ENCODE measurements at regions of chr2 and their contacts with region 1.

Region 1: DNA sequence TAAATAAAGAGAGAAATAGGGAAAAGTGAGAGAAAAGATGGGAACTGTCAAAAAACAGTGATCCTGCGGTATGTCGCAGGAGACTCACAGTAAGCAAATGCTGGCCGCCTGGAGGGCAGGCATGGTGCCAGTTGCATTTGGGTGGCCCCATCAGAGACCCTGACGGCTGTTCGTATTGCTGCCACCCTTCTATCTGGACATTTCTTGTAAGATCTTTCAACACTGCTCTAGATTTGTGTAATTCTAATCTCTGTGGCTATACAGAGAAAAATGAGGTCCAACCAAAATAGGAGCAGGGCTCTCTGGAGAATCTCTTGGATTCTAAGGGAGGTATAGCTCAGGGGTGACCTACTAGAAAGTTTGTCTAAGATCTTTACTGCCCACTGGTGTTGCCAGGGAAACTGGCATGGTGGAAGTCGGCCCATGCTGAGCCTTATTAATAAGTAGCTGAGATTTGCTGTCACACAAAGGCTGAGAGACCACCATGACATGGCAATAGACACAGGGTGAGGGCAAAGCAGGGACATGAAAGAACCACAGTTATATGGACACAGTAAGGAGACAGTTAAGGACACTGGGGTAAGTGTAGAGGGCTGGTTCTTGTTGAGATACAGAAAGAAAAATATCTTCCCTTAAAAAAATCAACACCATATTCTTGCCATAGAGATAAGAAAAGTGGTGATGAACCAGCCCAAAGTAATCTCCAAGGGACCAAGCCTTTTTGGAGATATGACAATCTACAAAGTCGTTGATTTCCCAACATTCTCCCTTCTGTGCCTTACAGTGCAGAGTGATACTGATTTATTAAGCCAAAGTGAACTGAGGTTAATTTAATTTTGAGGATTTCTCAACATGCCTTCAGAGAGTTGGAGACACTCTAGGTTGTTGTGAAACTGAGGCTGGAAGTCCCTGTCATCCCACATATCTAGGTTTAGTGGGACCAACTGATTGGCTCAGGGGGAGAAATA is 26.4 kb upstream of the FZD7 start:
- DNase-seq: no peak
- ATAC-seq: no peak
- H3K4me3 ChIP-seq: no peak overlapping the region
- H3K27ac ChIP-seq: no peak overlapping the region
- H3K4me1 ChIP-seq: peaks cover 23% of the 10 kb centered on the region
- H3K27me3 ChIP-seq: no peaks in the 10 kb centered on the region
- CTCF ChIP-seq: no peak
- EP300 ChIP-seq: no peak
- POLR2A ChIP-seq: no peak
- RAD21 ChIP-seq: 0 out of 2 replicates have a peak, but pooled peaks have one; percentile 8

Region 2: DNA sequence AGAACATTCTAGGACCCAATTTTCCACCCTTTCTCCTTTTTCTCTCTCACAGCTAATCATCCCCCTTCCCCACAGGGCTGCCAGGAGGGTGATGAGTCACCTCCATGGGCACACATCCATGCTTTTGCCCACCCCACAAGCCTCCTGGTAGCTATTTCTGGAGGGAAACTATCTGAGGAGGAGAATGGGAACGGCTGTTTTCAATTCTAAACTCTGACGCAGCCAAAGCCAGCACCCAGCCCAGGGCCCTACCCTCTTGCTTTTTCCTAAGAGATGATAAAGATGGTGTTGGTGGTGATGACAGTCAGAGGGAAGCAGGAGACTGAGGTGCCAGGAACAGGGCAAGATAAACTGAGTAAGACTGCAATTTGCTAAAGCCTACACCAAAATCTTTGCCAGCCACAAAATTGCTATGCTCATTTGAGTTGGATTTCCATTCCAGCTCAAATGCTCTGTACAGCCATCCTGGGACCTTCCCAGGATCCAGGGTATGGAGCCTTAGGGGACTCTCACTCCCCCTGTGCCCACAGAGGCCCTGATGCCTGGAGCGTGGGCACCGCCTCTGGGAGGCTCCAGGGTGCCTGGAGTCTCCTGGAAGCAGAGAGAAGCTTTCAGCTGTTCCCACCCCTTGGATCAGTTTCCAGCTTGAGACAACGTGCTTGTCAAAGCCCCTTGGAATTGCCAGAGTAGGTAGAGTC is 35.6 kb before region 1 on chr2:
- CTCF ChIA-PET with region 1: interaction called, 5 read pairs
- POLR2A ChIA-PET with region 1: interaction called, 6 read pairs
- RAD21 ChIA-PET with region 1: no interaction called
- SMC1A ChIA-PET with region 1: interaction called, 11 read pairs
- in situ Hi-C with region 1: no loop called
- intact Hi-C with region 1: no loop called
- DNase-seq: no peak
- ATAC-seq: no peak
- H3K4me3 ChIP-seq: no peak overlapping the region
- H3K27ac ChIP-seq: no peak overlapping the region
- H3K4me1 ChIP-seq: no peaks in the 10 kb centered on the region
- H3K27me3 ChIP-seq: no peaks in the 10 kb centered on the region
- CTCF ChIP-seq: no peak
- EP300 ChIP-seq: no peak
- POLR2A ChIP-seq: no peak
- RAD21 ChIP-seq: no peak

Region 3: DNA sequence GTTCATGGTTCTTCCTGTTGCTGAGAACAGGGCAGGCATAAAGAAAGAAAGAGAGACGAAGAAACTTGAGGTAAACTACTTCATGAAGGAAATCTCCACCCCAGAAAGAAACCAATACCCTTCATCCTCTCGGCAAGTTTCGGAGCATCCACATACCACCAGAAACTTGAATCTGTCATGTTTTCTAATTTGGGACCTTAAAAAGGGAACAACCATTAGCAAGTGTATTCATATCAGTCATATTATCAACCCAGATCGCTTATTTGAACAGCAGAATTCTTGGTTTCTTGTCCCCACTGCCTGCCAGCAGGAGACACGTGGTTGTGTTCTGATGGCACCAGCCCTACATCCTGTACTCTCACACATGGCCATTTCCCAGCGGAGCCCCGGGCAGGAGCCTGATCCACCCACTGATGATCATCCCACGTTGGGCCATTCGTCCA is 26.9 kb before region 1 on chr2:
- CTCF ChIA-PET with region 1: interaction called, 5 read pairs
- POLR2A ChIA-PET with region 1: interaction called, 6 read pairs
- RAD21 ChIA-PET with region 1: no interaction called
- SMC1A ChIA-PET with region 1: interaction called, 11 read pairs
- in situ Hi-C with region 1: no loop called
- intact Hi-C with region 1: loop called (anchors 2 kb)
- DNase-seq: peak; percentile 69
- ATAC-seq: peak; percentile 88
- H3K4me3 ChIP-seq: no peak overlapping the region
- H3K27ac ChIP-seq: peak overlapping the region; percentile 17
- H3K4me1 ChIP-seq: peaks cover 7% of the 10 kb centered on the region
- H3K27me3 ChIP-seq: no peaks in the 10 kb centered on the region
- CTCF ChIP-seq: no peak
- EP300 ChIP-seq: no peak
- POLR2A ChIP-seq: no peak
- RAD21 ChIP-seq: no peak

Region 4: DNA sequence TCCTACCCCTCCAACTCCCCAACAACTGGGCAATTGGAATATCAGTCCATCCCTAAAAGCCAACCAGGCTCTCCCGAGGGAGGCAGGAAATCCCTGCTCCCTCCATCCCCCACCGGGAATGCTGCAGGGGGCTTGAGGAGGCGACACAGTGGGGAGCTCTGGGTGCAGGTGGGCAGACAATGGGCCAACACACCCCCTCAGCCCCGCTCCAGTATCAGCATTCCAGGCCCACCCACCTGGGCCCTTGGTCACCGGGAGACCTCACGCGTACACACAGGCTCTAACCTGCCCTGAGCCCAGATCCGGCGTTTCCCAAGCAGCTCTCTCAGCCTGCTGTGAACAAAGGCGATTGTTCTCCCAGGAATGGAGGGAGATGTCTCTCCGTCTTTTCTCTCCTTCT is 11.3 kb before region 1 on chr2:
- CTCF ChIA-PET with region 1: interaction called, 5 read pairs
- POLR2A ChIA-PET with region 1: interaction called, 5 read pairs
- RAD21 ChIA-PET with region 1: interaction called, 9 read pairs
- SMC1A ChIA-PET with region 1: interaction called, 17 read pairs
- in situ Hi-C with region 1: no loop called
- intact Hi-C with region 1: no loop called
- DNase-seq: no peak
- ATAC-seq: no peak
- H3K4me3 ChIP-seq: no peak overlapping the region
- H3K27ac ChIP-seq: no peak overlapping the region
- H3K4me1 ChIP-seq: no peaks in the 10 kb centered on the region; the same call in 1 of the 2 replicates
- H3K27me3 ChIP-seq: no peaks in the 10 kb centered on the region
- CTCF ChIP-seq: no peak
- EP300 ChIP-seq: no peak
- POLR2A ChIP-seq: no peak
- RAD21 ChIP-seq: no peak

Region 5: GRCh38 chr2:202017940-202018339 is 10.6 kb after region 1 on chr2:
- CTCF ChIA-PET with region 1: interaction called, 8 read pairs
- POLR2A ChIA-PET with region 1: interaction called, 3 read pairs
- RAD21 ChIA-PET with region 1: interaction called, 3 read pairs
- SMC1A ChIA-PET with region 1: interaction called, 18 read pairs
- in situ Hi-C with region 1: no loop called
- intact Hi-C with region 1: no loop called
- DNase-seq: no peak
- ATAC-seq: no peak
- H3K4me3 ChIP-seq: no peak overlapping the region
- H3K27ac ChIP-seq: no peak overlapping the region
- H3K4me1 ChIP-seq: no peaks in the 10 kb centered on the region
- H3K27me3 ChIP-seq: no peaks in the 10 kb centered on the region; a peak in 1 of 4 replicates
- CTCF ChIP-seq: no peak
- EP300 ChIP-seq: no peak
- POLR2A ChIP-seq: no peak
- RAD21 ChIP-seq: no peak

Region 6: GRCh38 chr2:202109737-202110184 is 102.5 kb after region 1 on chr2:
- CTCF ChIA-PET with region 1: no interaction called
- POLR2A ChIA-PET with region 1: no interaction called
- RAD21 ChIA-PET with region 1: no interaction called
- SMC1A ChIA-PET with region 1: no interaction called
- in situ Hi-C with region 1: no loop called
- intact Hi-C with region 1: no loop called
- DNase-seq: no peak
- ATAC-seq: no peak
- H3K4me3 ChIP-seq: no peak overlapping the region
- H3K27ac ChIP-seq: no peak overlapping the region
- H3K4me1 ChIP-seq: no peaks in the 10 kb centered on the region
- H3K27me3 ChIP-seq: peaks cover 2 to 5% of the 10 kb centered on the region in 2 experiments; a peak in 2 of 4 replicates
- CTCF ChIP-seq: no peak
- EP300 ChIP-seq: no peak
- POLR2A ChIP-seq: no peak
- RAD21 ChIP-seq: no peak